ENCODE measurements at regions of chr5 and their contacts with region 1.

Region 1: DNA sequence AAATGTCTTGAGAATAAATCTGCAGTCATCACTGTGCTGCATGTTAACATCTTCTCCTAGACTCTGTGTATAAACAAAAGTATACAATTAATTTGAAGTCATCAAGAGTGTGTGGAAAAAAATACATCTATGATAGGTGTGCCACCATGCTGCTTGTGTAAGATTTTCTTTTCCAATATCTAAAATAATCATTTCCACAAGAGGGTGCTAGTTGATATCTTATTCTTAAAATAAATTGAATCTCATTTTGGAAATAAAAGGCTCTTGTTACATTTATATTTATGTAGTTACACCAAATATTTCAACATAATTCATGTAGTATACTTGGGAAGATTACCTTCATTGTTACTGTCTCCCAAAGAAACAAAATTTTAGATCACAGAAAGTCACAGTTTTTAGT is 14.1 kb upstream of the MOCS2 start:
- DNase-seq: no peak
- H3K4me3 ChIP-seq: no peak overlapping the region
- H3K27ac ChIP-seq: no peak overlapping the region
- H3K4me1 ChIP-seq: peaks cover 12% of the 10 kb centered on the region
- H3K27me3 ChIP-seq: no peaks in the 10 kb centered on the region
- CTCF ChIP-seq: peak in 1 of 2 donors; percentile 20

Region 2: GRCh38 chr5:52725065-52725746 is 398.5 kb before region 1 on chr5:
- CTCF ChIA-PET with region 1: no interaction called
- dilution Hi-C with region 1: no loop called
- in situ Hi-C with region 1: no loop called
- intact Hi-C with region 1: no loop called
- DNase-seq: peak; percentile 95
- H3K4me3 ChIP-seq: no peak overlapping the region
- H3K27ac ChIP-seq: peak overlapping the region; percentile 51
- H3K4me1 ChIP-seq: peaks cover 38% of the 10 kb centered on the region
- H3K27me3 ChIP-seq: no peaks in the 10 kb centered on the region
- CTCF ChIP-seq: no peak

Region 3: DNA sequence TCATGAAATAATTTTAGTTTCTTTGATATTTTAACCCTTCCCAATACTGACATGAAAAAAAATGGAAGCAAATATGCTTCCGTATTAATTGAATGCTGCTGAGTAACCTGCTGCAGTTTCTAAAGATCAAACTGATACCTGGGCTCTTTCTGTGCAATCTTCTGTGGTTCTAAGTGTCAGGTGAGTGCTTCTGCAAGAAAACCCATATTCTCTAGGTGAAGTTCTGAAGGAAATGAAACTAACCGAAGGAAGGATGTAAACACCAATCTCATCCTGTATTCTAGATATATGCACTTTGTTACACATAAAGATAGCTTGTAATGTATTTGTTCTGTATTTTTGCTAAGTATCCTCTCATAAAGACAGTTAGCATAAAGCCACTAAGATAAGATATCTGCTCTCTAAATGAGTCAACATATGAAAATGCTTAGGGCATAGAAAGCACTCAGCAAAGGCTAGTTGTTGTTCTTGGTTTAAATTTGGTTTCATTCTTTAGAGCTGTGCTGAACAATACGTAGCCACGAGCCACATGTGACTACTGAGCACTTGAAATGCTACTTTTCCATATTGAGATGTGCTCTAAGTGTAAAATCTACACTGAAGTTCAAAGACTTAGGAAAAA is 82.5 kb before region 1 on chr5:
- CTCF ChIA-PET with region 1: no interaction called
- dilution Hi-C with region 1: no loop called
- in situ Hi-C with region 1: no loop called
- intact Hi-C with region 1: no loop called
- DNase-seq: no peak
- H3K4me3 ChIP-seq: no peak overlapping the region
- H3K27ac ChIP-seq: no peak overlapping the region
- H3K4me1 ChIP-seq: peaks cover 37% of the 10 kb centered on the region
- H3K27me3 ChIP-seq: no peaks in the 10 kb centered on the region
- CTCF ChIP-seq: no peak

Region 4: GRCh38 chr5:53262348-53262970 is 138.8 kb after region 1 on chr5:
- CTCF ChIA-PET with region 1: no interaction called
- dilution Hi-C with region 1: no loop called
- in situ Hi-C with region 1: no loop called
- intact Hi-C with region 1: loop called (anchors 5 kb)
- DNase-seq: peak; percentile 60
- H3K4me3 ChIP-seq: no peak overlapping the region
- H3K27ac ChIP-seq: peak overlapping the region; percentile 48
- H3K4me1 ChIP-seq: peaks cover 44% of the 10 kb centered on the region
- H3K27me3 ChIP-seq: no peaks in the 10 kb centered on the region
- CTCF ChIP-seq: peak; percentile 63 to 68

Region 5: GRCh38 chr5:54229041-54229780 is 1105.5 kb after region 1 on chr5:
- CTCF ChIA-PET with region 1: no interaction called
- dilution Hi-C with region 1: no loop called
- in situ Hi-C with region 1: no loop called
- intact Hi-C with region 1: loop called (anchors 1 kb)
- DNase-seq: peak; percentile 46
- H3K4me3 ChIP-seq: no peak overlapping the region
- H3K27ac ChIP-seq: no peak overlapping the region
- H3K4me1 ChIP-seq: no peaks in the 10 kb centered on the region
- H3K27me3 ChIP-seq: no peaks in the 10 kb centered on the region
- CTCF ChIP-seq: peak; percentile 91 to 98